GM13976 (cell line): ENCODE measurements at regions of chr21 and their contacts with region 1.

Region 1: DNA sequence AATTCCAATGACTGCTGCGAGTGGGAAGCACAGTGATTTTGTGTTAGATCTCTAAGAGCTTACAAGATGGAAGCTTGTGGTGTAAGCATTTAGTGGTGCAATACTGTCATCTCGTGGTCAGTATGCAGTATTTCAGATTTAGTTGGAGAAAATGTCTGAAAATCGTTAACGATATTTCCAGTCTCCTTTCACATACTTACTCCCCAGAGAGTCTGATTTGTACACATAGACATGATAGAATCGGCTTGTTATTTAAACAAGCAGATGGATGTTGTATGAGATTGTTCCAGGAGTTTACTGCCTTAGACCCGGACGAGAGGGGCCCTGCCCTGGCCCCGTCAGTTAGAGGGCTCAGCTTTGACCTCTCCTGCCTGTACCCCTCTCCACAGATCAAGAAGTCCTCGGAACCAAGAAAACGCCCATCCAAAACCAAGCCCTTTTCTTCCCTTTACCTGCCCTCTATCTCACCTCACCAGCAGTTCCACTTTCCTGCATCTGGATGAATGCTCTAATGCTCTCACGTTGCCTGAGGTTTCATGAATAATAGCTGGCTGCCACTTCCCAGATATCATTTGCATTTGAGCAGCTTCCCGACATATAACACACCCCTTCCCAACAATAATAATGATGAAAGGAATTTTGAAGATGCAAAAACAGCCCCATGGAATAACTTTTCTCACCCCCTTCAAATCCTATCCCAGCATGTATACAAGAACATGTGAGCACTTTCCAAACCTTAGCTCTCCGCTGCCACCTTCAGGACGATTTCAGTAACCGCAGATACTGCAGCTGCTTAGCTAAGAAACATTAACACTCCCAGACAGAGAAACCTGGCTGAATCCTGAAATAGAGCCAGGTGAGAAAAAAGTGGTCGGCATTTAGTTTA is 247.3 kb downstream of the LTN1 start:
- DNase-seq: peak; percentile 41
- CTCF ChIP-seq: peak; percentile 81

Region 2: GRCh38 chr21:26842976-26843932 is 1902.1 kb before region 1 on chr21:
- in situ Hi-C with region 1: loop called (anchors 25 kb)
- DNase-seq: no peak
- CTCF ChIP-seq: no peak

Region 3: GRCh38 chr21:28235169-28235895 is 510.0 kb before region 1 on chr21:
- in situ Hi-C with region 1: no loop called
- DNase-seq: no peak
- CTCF ChIP-seq: no peak

Region 4: DNA sequence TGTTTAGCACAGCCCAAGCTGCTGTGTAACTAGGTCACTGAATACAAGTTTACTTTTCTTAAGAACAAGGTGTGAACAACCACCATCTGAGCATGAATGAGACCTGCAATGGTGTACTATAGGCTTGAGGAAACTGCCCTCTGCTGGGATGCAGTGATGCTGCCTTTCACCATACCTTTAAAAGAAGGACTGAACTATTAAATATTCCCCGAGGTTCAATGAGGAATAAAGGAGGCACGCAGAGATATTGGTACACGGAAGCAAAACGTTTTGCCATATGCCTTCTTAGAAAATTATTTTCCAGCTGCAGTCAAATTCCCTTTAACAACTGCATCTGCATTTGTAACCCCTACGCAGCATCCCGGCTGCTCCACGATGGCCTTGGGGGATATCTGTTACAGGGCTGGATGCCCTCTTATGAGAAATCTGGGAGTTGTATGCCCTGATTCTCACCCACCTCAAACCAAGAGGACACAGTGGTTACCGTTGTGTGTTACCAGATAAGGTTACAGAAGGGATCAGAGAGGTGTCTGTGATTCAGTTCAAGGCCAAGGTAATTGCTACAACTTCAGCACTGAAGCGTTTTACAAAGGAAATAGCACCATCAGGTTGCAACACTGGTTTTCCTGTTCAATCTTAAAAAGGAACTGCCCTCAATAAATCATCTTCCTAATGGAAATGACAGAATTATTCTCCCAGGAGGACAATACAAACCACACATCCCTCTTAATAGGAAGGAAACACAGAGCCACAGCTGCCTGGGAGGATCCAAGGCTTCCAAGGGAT is 223.2 kb before region 1 on chr21:
- in situ Hi-C with region 1: loop called (anchors 10 kb)
- DNase-seq: no peak
- CTCF ChIP-seq: no peak